ENCODE measurements at regions of chr6 and their contacts with region 1.

Region 1: GRCh38 chr6:27864906-27865849 is 47.0 kb downstream of the OR2B2 start:
- DNase-seq: peak; percentile 88
- H3K4me3 Mint-ChIP-seq: peak overlapping the region; percentile 99
- H3K27ac Mint-ChIP-seq: peak overlapping the region; percentile 100
- H3K4me1 Mint-ChIP-seq: peaks cover 65% of the 10 kb centered on the region
- H3K27me3 Mint-ChIP-seq: no peaks in the 10 kb centered on the region

Region 2: DNA sequence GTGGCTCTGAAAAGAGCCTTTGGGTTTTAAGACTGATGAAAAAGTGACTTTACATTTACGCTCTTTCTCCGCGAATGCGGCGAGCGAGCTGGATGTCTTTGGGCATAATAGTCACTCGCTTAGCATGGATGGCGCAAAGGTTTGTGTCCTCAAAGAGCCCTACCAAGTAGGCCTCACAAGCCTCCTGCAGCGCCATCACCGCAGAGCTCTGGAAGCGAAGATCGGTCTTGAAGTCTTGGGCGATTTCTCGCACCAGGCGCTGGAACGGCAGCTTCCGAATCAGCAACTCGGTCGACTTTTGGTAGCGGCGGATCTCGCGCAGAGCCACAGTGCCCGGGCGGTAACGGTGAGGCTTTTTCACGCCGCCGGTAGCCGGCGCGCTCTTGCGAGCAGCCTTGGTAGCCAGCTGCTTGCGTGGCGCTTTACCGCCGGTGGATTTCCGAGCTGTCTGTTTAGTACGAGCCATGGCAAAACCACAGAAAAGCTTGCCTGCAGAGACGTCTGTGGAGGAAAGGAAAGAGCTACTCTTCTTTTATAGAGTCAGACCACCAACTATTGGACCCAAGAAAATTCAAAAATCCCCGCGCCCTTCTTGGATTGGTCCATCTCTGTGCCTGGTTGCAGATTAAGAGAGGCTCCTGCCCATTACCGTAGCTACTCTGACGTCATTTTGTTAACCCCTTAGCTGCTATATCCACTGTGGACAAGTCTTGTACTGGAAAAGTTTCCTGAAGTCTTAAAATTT is 1833.4 kb before region 1 on chr6:
- CTCF ChIA-PET with region 1: no interaction called
- POLR2A ChIA-PET with region 1: interaction called, 14 read pairs
- DNase-seq: peak; percentile 96
- H3K4me3 Mint-ChIP-seq: peak overlapping the region; percentile 96
- H3K27ac Mint-ChIP-seq: peak overlapping the region; percentile 100
- H3K4me1 Mint-ChIP-seq: peaks cover 79% of the 10 kb centered on the region
- H3K27me3 Mint-ChIP-seq: peaks cover 3% of the 10 kb centered on the region

Region 3: GRCh38 chr6:26249957-26250697 is 1615.1 kb before region 1 on chr6:
- CTCF ChIA-PET with region 1: no interaction called
- POLR2A ChIA-PET with region 1: interaction called, 11 read pairs
- DNase-seq: peak; percentile 82
- H3K4me3 Mint-ChIP-seq: peak overlapping the region; percentile 98
- H3K27ac Mint-ChIP-seq: peak overlapping the region; percentile 100
- H3K4me1 Mint-ChIP-seq: peaks cover 40% of the 10 kb centered on the region
- H3K27me3 Mint-ChIP-seq: no peaks in the 10 kb centered on the region

Region 4: GRCh38 chr6:27146706-27147505 is 718.3 kb before region 1 on chr6:
- CTCF ChIA-PET with region 1: no interaction called
- POLR2A ChIA-PET with region 1: interaction called, 22 read pairs
- DNase-seq: peak; percentile 88
- H3K4me3 Mint-ChIP-seq: no peak overlapping the region
- H3K27ac Mint-ChIP-seq: no peak overlapping the region
- H3K4me1 Mint-ChIP-seq: peaks cover 24% of the 10 kb centered on the region
- H3K27me3 Mint-ChIP-seq: no peaks in the 10 kb centered on the region

Region 5: DNA sequence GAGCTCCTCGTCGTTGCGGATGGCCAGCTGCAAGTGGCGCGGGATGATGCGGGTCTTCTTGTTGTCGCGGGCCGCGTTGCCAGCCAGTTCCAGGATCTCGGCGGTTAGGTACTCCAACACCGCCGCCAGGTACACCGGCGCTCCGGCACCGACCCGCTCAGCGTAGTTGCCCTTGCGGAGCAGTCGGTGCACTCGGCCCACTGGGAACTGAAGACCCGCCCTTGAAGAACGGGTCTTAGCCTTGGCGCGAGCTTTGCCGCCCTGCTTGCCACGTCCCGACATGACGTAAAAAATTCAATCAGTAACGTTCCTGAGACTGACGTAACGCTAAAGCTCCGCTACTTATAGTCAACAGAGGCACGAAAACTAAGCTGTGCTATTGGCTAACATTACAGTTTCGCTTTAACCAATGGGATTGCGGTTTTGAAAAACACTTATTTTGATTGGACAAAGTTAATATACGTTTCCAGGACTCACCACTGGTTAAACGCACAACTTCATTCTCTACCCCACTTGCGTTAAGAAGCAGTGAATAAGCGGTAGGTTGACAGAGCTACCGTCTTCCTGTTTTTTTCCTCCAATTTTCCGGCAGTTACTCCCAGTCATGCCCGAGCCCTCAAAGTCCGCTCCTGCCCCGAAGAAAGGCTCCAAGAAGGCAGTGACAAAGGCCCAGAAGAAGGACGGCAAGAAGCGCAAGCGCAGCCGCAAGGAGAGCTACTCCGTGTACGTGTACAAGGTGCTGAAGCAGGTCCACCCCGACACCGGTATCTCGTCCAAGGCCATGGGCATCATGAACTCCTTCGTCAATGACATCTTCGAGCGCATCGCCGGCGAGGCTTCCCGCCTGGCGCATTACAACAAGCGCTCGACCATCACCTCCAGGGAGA is 26.9 kb before region 1 on chr6:
- CTCF ChIA-PET with region 1: interaction called, 45 read pairs
- POLR2A ChIA-PET with region 1: interaction called, 553 read pairs
- DNase-seq: peak; percentile 92
- H3K4me3 Mint-ChIP-seq: no peak overlapping the region
- H3K27ac Mint-ChIP-seq: no peak overlapping the region
- H3K4me1 Mint-ChIP-seq: peaks cover 31% of the 10 kb centered on the region
- H3K27me3 Mint-ChIP-seq: no peaks in the 10 kb centered on the region

Measured in activated CD4-positive, alpha-beta T cell treated with anti-CD3 and anti-CD28 coated beads, Interleukin-2, amount 10 ng/mL, durations not matched to agents 7 days and 5 days (primary cell).